GM10248 (cell line): ENCODE measurements at regions of chr19 and their contacts with region 1.

Region 1: DNA sequence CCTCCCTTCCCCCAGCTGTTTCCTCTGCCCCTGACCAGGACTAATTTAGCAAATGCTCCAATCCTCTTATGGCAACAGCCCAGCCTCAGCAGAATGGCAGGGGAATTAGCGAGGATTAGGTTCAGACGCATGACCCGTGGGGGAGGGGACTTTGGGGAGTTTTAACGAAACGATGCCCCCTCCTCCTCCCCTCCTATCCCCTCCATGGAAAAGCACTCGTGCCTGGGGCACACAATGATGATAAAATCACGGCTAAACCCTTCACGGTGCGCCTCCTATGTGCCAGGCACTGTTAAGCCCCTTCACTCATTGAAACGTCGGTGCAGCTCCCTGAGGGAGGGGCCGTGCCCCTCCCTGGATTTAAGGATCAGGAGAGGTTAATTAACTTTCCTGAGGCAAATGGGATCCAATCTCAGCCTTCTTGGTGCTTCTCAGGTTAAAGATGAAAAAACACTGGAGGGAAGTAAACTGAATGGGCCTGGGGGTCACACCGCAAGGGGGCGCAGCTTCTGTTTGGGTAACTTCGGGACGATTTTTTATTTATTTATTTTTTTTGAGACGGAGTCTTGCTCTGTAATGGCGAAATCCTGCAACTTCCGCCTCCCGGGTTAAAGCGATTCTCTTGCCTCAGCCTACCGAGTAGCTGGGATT is 10.1 kb upstream of the TPRX2 start:
- DNase-seq: no peak
- CTCF ChIP-seq: no peak

Region 2: GRCh38 chr19:47863514-47863936 is 14.6 kb after region 1 on chr19:
- CTCF ChIA-PET with region 1: interaction called, 11 read pairs
- POLR2A ChIA-PET with region 1: no interaction called
- DNase-seq: peak; percentile 89
- CTCF ChIP-seq: peak; percentile 96